ENCODE measurements at regions of chr13 and their contacts with region 1.

Region 1: GRCh38 chr13:71979616-71980015 is 112.6 kb upstream of the DACH1 start:
- DNase-seq: no peak
- ATAC-seq: no peak

Region 2: GRCh38 chr13:71350886-71351285 is 628.7 kb before region 1 on chr13:
- intact Hi-C with region 1: loop called (anchors 5 kb)
- DNase-seq: no peak
- ATAC-seq: no peak